ENCODE measurements at regions of chr11 and their contacts with region 1.

Region 1: GRCh38 chr11:12673924-12674570 is at the start of gene TEAD1:
- DNase-seq: peak; percentile 94
- ATAC-seq: peak; percentile 91
- H3K4me3 Mint-ChIP-seq: peak within 1 kb of the TSS; percentile 70
- H3K27ac Mint-ChIP-seq: no peak within 1 kb of the TSS
- H3K4me1 Mint-ChIP-seq: peaks cover 7% of the 10 kb centered on the region
- H3K27me3 Mint-ChIP-seq: peaks cover 63% of the 10 kb centered on the region
- total RNA-seq, gene TEAD1: 0.59 to 0.65 TPM

Region 2: DNA sequence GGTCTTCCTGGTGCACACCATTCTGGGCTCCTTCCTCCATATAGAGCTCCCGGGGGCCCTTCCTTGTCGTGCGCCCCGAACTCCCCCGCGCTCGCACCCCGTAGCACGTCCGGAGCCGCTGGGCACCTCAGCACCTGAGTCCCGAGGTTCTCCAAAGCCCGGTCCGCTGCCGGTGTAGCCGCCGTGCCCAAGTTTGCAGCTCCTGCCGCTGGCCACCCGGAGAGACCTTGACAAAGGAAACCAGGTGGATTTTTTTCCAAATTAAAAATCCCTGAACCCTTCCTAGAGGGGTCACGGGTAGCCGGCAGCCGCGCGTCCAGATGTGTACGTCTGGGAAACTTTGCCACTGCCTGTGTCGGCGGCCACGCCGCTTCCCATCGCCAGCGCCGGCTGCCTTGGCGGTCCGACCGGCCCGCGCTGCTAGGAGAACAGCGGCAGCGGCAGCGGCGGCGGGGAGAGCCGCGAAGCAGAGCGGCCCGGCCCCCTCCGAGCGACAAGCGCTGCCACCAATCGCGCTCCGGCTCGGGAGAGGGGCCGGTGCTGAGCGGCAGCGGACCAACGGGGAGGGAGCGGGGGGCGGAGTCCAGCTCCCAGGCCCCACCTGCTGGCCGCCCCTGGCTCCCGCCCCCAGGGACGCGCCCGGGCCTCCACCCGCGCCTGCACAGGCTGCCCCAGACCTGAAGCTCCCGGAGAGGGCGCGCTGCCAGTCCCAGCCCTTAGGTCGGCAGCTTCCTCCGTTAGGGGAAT is 1052.3 kb before region 1 on chr11 and contains the start of gene GALNT18:
- CTCF ChIA-PET with region 1: no interaction called
- POLR2A ChIA-PET with region 1: no interaction called
- intact Hi-C with region 1: loop called in 1 of 2 experiments (anchors 10 kb)
- DNase-seq: peak; percentile 94
- ATAC-seq: peak; percentile 99
- H3K4me3 Mint-ChIP-seq: peak within 1 kb of the TSS; percentile 80
- H3K27ac Mint-ChIP-seq: peak within 1 kb of the TSS; percentile 63
- H3K4me1 Mint-ChIP-seq: peaks cover 5% of the 10 kb centered on the region
- H3K27me3 Mint-ChIP-seq: peaks cover 37% of the 10 kb centered on the region
- total RNA-seq, gene GALNT18: 6.9 to 8.8 TPM

Region 3: GRCh38 chr11:12110201-12110713 is 563.8 kb before region 1 on chr11 and contains the start of gene MICAL2:
- CTCF ChIA-PET with region 1: no interaction called
- POLR2A ChIA-PET with region 1: no interaction called
- intact Hi-C with region 1: loop called in 1 of 2 experiments (anchors 5 kb)
- DNase-seq: peak; percentile 92
- ATAC-seq: peak; percentile 88
- H3K4me3 Mint-ChIP-seq: peak within 1 kb of the TSS; percentile 75
- H3K27ac Mint-ChIP-seq: peak within 1 kb of the TSS; percentile 90
- H3K4me1 Mint-ChIP-seq: peaks cover 41% of the 10 kb centered on the region
- H3K27me3 Mint-ChIP-seq: no peaks in the 10 kb centered on the region
- total RNA-seq, gene MICAL2: 186 to 207 TPM

Region 4: GRCh38 chr11:12653725-12654124 is 20.3 kb before region 1 on chr11:
- CTCF ChIA-PET with region 1: no interaction called
- POLR2A ChIA-PET with region 1: no interaction called
- intact Hi-C with region 1: no loop called
- DNase-seq: no peak
- ATAC-seq: no peak
- H3K4me3 Mint-ChIP-seq: no peak overlapping the region
- H3K27ac Mint-ChIP-seq: no peak overlapping the region
- H3K4me1 Mint-ChIP-seq: no peaks in the 10 kb centered on the region
- H3K27me3 Mint-ChIP-seq: peaks cover 3% of the 10 kb centered on the region

Region 5: GRCh38 chr11:12717851-12718291 is 43.8 kb after region 1 on chr11:
- CTCF ChIA-PET with region 1: no interaction called
- POLR2A ChIA-PET with region 1: no interaction called
- intact Hi-C with region 1: loop called in 1 of 2 experiments (anchors 1 kb)
- DNase-seq: peak; percentile 81
- ATAC-seq: peak; percentile 99
- H3K4me3 Mint-ChIP-seq: no peak overlapping the region
- H3K27ac Mint-ChIP-seq: no peak overlapping the region
- H3K4me1 Mint-ChIP-seq: peaks cover 20% of the 10 kb centered on the region
- H3K27me3 Mint-ChIP-seq: peaks cover 67% of the 10 kb centered on the region

Region 6: GRCh38 chr11:12888525-12889158 is 214.6 kb after region 1 on chr11:
- CTCF ChIA-PET with region 1: interaction called, 4 read pairs
- POLR2A ChIA-PET with region 1: no interaction called
- intact Hi-C with region 1: loop called (anchors 5 to 10 kb)
- DNase-seq: peak; percentile 82
- ATAC-seq: peak; percentile 33
- H3K4me3 Mint-ChIP-seq: no peak overlapping the region
- H3K27ac Mint-ChIP-seq: no peak overlapping the region
- H3K4me1 Mint-ChIP-seq: no peaks in the 10 kb centered on the region
- H3K27me3 Mint-ChIP-seq: peaks cover 4% of the 10 kb centered on the region

Region 7: DNA sequence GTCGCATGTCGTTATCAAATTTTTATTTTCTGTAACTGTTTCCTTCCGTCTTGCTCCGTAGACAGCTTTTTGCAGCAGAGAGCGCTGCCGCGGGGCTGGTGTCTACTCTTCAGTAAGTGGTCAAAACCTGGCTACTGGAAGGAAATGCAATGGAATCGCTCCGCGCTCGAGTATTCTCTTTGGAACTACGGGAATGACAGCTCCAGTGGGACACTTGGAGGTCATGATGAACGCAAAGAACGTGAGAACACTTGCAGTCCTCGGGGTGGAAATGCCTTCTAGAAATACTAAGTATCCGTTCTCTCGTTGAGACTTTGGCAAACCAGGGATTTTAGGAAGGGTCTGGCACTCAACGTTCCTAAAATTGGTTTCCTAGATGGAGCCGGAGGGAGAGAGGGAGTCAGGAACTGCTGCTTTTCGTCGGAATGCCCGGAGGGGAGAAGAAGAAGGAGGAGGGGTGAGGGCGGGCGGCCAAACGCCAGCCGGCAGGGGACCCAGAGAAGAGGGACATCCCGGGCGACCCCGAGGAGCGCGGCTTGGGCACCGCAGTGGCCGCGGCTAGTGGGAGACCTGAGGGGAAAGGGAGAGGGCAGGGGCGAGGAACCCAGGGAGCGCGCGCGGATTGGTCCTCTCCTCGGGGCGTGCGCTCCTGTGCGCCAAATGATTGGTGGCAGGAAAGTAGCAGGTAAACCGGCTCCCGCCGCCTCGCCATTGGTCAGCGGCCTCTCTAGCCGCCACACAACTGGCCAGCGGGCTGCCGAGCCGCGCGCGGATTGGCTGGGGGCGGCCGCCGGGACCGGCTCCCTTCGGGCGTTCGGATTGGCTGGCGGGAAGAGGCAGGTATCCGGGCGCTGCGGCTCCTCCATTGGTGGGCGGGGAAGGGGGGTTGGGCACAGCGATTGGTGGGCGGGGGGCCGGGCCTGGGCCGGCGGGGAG is 603.1 kb after region 1 on chr11:
- CTCF ChIA-PET with region 1: no interaction called
- POLR2A ChIA-PET with region 1: no interaction called
- intact Hi-C with region 1: loop called in 1 of 2 experiments (anchors 1 kb)
- DNase-seq: peak; percentile 98
- ATAC-seq: peak; percentile 93
- H3K4me3 Mint-ChIP-seq: peak overlapping the region; percentile 87
- H3K27ac Mint-ChIP-seq: peak overlapping the region; percentile 84
- H3K4me1 Mint-ChIP-seq: peaks cover 43% of the 10 kb centered on the region
- H3K27me3 Mint-ChIP-seq: peaks cover 6% of the 10 kb centered on the region

Region 8: DNA sequence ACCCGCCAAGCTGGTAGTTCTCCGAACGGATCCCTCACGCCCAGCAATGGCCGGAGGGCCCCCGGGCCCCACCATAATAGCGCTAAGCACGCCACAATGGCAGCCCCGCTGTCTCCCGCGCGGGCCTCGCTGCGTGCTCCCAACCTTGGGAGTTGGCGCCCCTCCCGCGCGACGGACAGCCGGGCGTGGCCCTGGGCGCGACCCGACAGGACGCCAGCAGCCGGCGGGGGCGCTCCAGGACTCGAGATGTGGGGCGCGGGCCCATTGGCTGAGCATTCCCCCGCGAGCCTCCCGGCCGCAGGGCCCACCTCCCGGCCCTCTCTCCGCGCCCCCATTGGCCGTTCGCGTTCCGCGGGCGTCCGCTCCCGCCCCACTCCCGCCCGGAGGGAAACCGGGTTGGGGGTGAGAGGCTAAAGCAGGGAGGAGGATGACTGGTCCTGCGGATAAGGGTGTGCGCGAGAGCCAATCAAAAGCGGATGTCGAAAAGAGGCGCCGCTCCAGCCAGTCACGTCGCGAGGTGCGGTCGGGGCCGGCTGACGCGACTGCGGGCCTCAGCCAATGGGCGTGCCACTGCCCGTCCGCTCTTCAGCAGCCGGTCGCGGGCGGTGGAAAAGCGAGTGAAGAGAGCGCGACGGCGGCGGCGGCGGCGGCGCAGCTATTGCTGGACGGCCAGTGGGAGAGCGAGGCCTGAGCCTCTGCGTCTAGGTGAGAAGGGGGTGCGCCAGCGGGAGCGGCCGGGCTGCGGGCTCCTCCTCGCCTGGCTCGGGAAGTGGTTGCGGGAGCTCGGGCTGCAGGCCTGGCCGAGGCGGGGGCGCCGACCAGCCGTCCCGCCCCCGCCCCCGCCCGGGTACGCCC is 994.3 kb after region 1 on chr11 and contains the start of gene FAR1:
- CTCF ChIA-PET with region 1: no interaction called
- POLR2A ChIA-PET with region 1: no interaction called
- intact Hi-C with region 1: loop called in 1 of 2 experiments (anchors 5 kb)
- DNase-seq: peak; percentile 98
- ATAC-seq: peak; percentile 92
- H3K4me3 Mint-ChIP-seq: peak within 1 kb of the TSS; percentile 95
- H3K27ac Mint-ChIP-seq: peak within 1 kb of the TSS; percentile 96
- H3K4me1 Mint-ChIP-seq: peaks cover 48% of the 10 kb centered on the region
- H3K27me3 Mint-ChIP-seq: peaks cover 9% of the 10 kb centered on the region
- total RNA-seq, gene FAR1: 34.8 to 36.4 TPM